ENCODE measurements at regions of chr11 and their contacts with region 1.

Region 1: DNA sequence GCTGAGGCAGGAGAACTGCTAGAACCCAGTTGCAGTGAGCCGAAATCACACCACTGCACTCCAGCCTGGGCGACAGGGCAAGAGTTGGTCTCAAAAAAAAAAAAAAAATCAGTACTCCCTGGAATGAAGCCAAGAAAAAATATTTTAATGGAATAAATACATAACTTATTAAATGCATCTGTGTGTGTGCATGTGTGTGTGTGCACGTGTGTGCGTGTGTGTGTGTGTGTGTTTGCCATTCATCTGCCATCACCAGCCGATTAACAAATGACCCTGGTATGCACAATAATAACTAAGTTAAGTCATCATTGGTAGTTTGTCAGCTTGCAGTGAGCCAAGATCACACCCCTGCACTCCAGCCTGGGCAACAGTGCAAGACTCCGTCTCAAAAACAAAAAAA is 35.0 kb upstream of the SCGB1A1 start:
- DNase-seq: no peak
- ATAC-seq: no peak
- H3K4me3 ChIP-seq: no peak overlapping the region
- H3K4me3 Mint-ChIP-seq: no peak overlapping the region
- H3K27ac ChIP-seq: no peak overlapping the region
- H3K27ac Mint-ChIP-seq: no peak overlapping the region
- H3K4me1 ChIP-seq: peaks cover 20% of the 10 kb centered on the region
- H3K4me1 Mint-ChIP-seq: peaks cover 14% of the 10 kb centered on the region
- H3K27me3 ChIP-seq: no peaks in the 10 kb centered on the region
- H3K27me3 Mint-ChIP-seq: peaks cover 5% of the 10 kb centered on the region
- CTCF ChIP-seq: no peak

Region 2: DNA sequence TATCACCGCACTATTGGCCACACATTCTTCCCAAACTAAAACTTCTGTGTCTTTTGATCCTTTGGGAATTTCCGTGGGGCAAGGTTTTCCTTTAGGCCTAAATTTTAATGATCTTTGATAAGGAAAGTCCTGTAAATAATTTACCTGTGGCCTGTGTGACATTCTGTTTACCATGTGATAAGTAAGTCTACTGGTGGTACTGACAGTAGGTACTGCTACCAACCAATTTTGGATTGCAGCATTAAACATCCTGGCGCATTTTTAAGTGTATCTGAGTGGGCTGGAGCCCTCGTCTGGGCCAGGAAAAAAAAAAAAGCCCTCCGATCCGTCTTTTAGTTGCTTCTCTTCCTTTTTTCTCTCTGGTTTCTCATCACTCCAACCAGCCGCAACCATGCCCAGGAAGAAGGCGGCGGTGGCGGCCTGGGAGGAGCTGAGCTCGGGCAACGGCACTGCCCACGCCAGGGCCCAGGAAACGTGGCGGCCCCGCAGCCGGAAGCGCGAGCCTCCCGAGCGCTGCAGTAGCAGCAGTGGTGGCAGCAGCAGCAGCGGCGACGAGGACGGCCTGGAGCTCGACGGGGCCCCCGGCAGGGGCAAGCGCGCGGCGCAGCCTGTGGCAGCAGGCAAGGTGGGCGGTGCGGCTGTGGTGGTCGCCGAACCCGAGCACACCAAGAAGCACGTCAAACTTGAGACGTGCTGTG is 12.9 kb before region 1 on chr11:
- CTCF ChIA-PET with region 1: no interaction called
- POLR2A ChIA-PET with region 1: no interaction called
- intact Hi-C with region 1: no loop called
- DNase-seq: peak in 10 of 14 experiments; percentile 19 to 75 (median 47)
- ATAC-seq: peak; percentile 93
- H3K4me3 ChIP-seq: peak overlapping the region; percentile 14
- H3K4me3 Mint-ChIP-seq: peak overlapping the region; percentile 76
- H3K27ac ChIP-seq: no peak overlapping the region
- H3K27ac Mint-ChIP-seq: peak overlapping the region; percentile 70
- H3K4me1 ChIP-seq: peaks cover 21% of the 10 kb centered on the region
- H3K4me1 Mint-ChIP-seq: peaks cover 17% of the 10 kb centered on the region
- H3K27me3 ChIP-seq: no peaks in the 10 kb centered on the region
- H3K27me3 Mint-ChIP-seq: no peaks in the 10 kb centered on the region
- CTCF ChIP-seq: no peak

Region 3: DNA sequence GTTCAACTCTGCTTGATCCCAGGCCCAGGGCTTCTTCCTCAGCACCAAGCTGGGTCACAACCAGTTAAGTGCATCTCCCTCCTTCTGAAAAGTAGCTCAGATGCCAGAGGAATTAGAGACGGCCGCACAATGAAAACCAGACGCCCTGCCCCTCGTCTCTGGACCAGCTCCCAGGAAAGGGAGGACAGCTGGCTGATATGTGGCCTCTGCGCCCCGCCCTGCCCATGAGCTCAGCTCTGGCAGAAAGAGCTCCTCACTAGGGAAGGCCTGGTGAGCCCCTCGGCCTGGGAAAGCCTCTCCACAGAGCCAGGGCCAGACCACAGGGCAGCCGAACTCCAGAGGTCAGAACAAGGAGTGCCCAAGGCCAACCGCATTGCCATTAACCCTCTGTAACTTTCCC is 16.9 kb after region 1 on chr11:
- CTCF ChIA-PET with region 1: no interaction called
- POLR2A ChIA-PET with region 1: no interaction called
- intact Hi-C with region 1: no loop called
- DNase-seq: no peak
- ATAC-seq: no peak
- H3K4me3 ChIP-seq: no peak overlapping the region
- H3K4me3 Mint-ChIP-seq: no peak overlapping the region
- H3K27ac ChIP-seq: no peak overlapping the region
- H3K27ac Mint-ChIP-seq: no peak overlapping the region
- H3K4me1 ChIP-seq: peaks cover 41% of the 10 kb centered on the region
- H3K4me1 Mint-ChIP-seq: peaks cover 29% of the 10 kb centered on the region
- H3K27me3 ChIP-seq: no peaks in the 10 kb centered on the region
- H3K27me3 Mint-ChIP-seq: no peaks in the 10 kb centered on the region
- CTCF ChIP-seq: no peak

Region 4: GRCh38 chr11:62508268-62509058 is 124.6 kb after region 1 on chr11:
- CTCF ChIA-PET with region 1: no interaction called
- POLR2A ChIA-PET with region 1: no interaction called
- intact Hi-C with region 1: no loop called
- DNase-seq: peak in 2 of 14 experiments; percentile 53 to 54
- ATAC-seq: no peak
- H3K4me3 ChIP-seq: no peak overlapping the region
- H3K4me3 Mint-ChIP-seq: no peak overlapping the region
- H3K27ac ChIP-seq: no peak overlapping the region
- H3K27ac Mint-ChIP-seq: no peak overlapping the region
- H3K4me1 ChIP-seq: no peaks in the 10 kb centered on the region
- H3K4me1 Mint-ChIP-seq: no peaks in the 10 kb centered on the region
- H3K27me3 ChIP-seq: no peaks in the 10 kb centered on the region
- H3K27me3 Mint-ChIP-seq: peaks cover 8% of the 10 kb centered on the region
- CTCF ChIP-seq: no peak

Region 5: GRCh38 chr11:62860835-62861563 is 477.2 kb after region 1 on chr11:
- CTCF ChIA-PET with region 1: no interaction called
- POLR2A ChIA-PET with region 1: no interaction called
- intact Hi-C with region 1: loop called in 1 of 2 experiments (anchors 5 kb)
- DNase-seq: no peak
- ATAC-seq: no peak
- H3K4me3 ChIP-seq: no peak overlapping the region
- H3K4me3 Mint-ChIP-seq: no peak overlapping the region
- H3K27ac ChIP-seq: no peak overlapping the region
- H3K27ac Mint-ChIP-seq: no peak overlapping the region
- H3K4me1 ChIP-seq: peaks cover 18% of the 10 kb centered on the region
- H3K4me1 Mint-ChIP-seq: peaks cover 18% of the 10 kb centered on the region
- H3K27me3 ChIP-seq: no peaks in the 10 kb centered on the region
- H3K27me3 Mint-ChIP-seq: no peaks in the 10 kb centered on the region
- CTCF ChIP-seq: no peak

Measured in CD4-positive, alpha-beta T cell (primary cell).